Activated naive CD4-positive, alpha-beta T cell treated with anti-CD3 and anti-CD28 coated beads for 36 hours (primary cell): ENCODE measurements at regions of chr12 and their contacts with region 1.

Region 1: GRCh38 chr12:122399592-122400373 is 22.7 kb downstream of the CLIP1 start:
- DNase-seq: peak; percentile 70
- H3K4me3 Mint-ChIP-seq: peak overlapping the region; percentile 51
- H3K27ac Mint-ChIP-seq: peak overlapping the region; percentile 81
- H3K4me1 Mint-ChIP-seq: peaks cover 44% of the 10 kb centered on the region
- H3K27me3 Mint-ChIP-seq: no peaks in the 10 kb centered on the region

Region 2: GRCh38 chr12:121939186-121939585 is 460.6 kb before region 1 on chr12:
- CTCF ChIA-PET with region 1: no interaction called
- intact Hi-C with region 1: no loop called
- DNase-seq: no peak
- H3K4me3 Mint-ChIP-seq: no peak overlapping the region
- H3K27ac Mint-ChIP-seq: no peak overlapping the region
- H3K4me1 Mint-ChIP-seq: peaks cover 5% of the 10 kb centered on the region
- H3K27me3 Mint-ChIP-seq: no peaks in the 10 kb centered on the region

Region 3: GRCh38 chr12:122265931-122266771 is 133.6 kb before region 1 on chr12 and contains the start of gene VPS33A:
- CTCF ChIA-PET with region 1: no interaction called
- intact Hi-C with region 1: no loop called
- DNase-seq: peak; percentile 95
- H3K4me3 Mint-ChIP-seq: peak within 1 kb of the TSS; percentile 94
- H3K27ac Mint-ChIP-seq: peak within 1 kb of the TSS; percentile 96
- H3K4me1 Mint-ChIP-seq: peaks cover 23% of the 10 kb centered on the region
- H3K27me3 Mint-ChIP-seq: peaks cover 3% of the 10 kb centered on the region
- total RNA-seq, gene VPS33A: 15.9 to 17.2 TPM

Region 4: DNA sequence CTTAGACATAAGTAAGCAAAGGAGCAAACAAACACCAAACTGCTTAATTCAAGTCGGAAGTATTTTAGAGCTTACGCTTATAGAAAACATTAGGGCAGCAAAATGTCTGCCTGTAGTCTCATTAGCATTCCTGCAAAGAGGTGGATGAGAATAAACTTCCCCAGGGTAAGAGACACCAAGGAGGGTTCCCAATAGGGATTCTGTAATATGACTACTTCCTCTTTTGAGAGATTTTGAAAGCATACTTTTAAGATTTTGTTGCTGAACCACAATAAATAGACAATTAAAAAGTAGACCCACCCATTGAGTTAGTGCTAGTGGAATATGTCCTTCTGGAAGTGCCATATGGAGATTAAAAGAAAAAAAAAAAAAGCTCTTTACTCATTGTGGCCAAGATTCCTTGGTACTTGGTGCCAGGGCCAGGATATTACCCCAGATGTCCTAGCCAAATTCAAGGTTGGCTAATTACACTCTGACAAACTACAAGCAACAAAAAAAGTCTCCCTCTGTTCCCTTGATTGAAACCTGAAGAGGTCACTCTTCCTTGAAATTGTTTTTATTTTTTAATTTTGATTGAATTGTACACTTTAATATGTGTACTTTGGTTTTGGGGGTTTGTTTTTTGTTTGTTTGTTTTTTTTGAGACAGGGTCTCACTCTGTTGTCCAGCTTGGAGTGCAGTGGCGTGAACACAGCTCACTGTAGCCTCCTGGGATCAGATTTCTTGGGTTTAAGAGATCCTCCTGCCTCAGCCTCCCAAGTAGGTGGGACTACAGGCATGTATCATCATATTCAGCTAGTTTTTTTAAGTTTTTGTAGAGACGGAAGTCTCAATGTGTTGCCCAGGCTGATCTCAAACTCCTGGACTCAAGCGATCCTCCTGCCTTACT is 14.0 kb after region 1 on chr12:
- CTCF ChIA-PET with region 1: interaction called, 17 read pairs
- intact Hi-C with region 1: loop called (anchors 1 kb)
- DNase-seq: no peak
- H3K4me3 Mint-ChIP-seq: peak overlapping the region; percentile 59
- H3K27ac Mint-ChIP-seq: peak overlapping the region; percentile 97
- H3K4me1 Mint-ChIP-seq: peaks cover 50% of the 10 kb centered on the region
- H3K27me3 Mint-ChIP-seq: no peaks in the 10 kb centered on the region

Region 5: DNA sequence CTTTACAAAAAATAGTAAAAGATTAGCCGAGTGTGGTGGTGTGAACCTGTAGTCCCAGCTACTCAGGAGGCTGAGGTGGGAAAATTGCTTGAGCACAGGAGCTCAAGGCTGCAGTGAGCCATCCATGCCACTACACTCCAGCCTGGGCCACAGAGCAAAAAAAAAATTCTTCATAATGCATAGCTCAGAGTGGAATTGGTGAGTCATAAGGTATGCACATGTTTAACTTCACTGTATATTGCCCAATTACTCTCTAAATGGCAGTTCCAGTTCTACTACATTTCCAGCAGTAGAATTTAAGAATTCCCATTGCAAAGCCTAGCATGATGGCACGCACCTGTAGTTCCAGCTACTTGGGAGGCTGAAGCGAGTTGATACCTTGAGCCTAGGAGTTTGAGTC is 49.6 kb after region 1 on chr12:
- CTCF ChIA-PET with region 1: interaction called, 16 read pairs
- intact Hi-C with region 1: loop called (anchors 1 kb)
- DNase-seq: peak; percentile 38
- H3K4me3 Mint-ChIP-seq: no peak overlapping the region
- H3K27ac Mint-ChIP-seq: no peak overlapping the region
- H3K4me1 Mint-ChIP-seq: peaks cover 30% of the 10 kb centered on the region
- H3K27me3 Mint-ChIP-seq: no peaks in the 10 kb centered on the region